Adrenal gland (tissue), 19 donors: ENCODE measurements at regions of chr3 and their contacts with region 1.

Region 1: DNA sequence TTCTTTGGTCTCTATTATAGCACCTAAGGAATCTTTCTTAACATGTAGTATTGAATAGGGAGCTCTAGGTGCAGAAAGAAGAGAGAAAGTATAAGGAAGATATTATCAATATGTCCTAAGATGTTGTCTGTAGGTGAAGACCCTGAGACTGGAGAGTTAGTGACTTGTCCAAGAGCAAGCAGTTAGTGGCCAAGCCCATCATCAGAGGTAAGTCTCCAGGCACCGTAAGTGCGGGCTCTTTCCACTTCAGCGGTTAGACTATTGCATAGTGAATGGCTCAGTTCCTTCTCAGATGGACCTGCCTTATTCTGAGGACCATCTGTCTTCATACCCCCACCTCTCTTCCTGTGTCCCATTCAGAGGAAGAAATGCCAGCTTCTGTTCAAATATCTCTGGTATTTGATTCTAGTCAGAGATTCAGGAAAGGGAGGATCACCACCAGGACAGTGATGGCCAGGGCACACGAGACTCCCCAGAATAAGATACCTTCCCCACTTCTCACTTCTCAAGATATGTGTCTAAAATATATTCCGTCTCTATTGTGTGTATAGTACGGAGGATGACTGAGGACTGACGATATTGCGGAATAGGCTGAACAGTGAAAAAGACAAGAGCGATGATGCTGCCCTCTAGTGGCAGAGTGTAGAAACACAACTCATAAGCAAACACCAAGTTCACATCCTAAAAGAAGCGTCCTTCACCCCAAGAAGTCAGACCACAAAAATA is 19.1 kb upstream of the ADGRG7 start:
- DNase-seq: peak; percentile 48 to 83 (median 60)
- H3K4me3 ChIP-seq: no peak overlapping the region
- H3K27ac ChIP-seq: no peak overlapping the region
- H3K4me1 ChIP-seq: no peaks in the 10 kb centered on the region
- H3K27me3 ChIP-seq: no peaks in the 10 kb centered on the region
- CTCF ChIP-seq: peak; percentile 86 to 94 (median 92)
- POLR2A ChIP-seq: no peak

Region 2: GRCh38 chr3:100463002-100463401 is 127.3 kb before region 1 on chr3:
- intact Hi-C with region 1: loop called (anchors 2 to 5 kb)
- DNase-seq: peak; percentile 29 to 66 (median 42)
- H3K4me3 ChIP-seq: no peak overlapping the region
- H3K27ac ChIP-seq: no peak overlapping the region
- H3K4me1 ChIP-seq: no peaks in the 10 kb centered on the region
- H3K27me3 ChIP-seq: no peaks in the 10 kb centered on the region
- CTCF ChIP-seq: peak; percentile 39 to 92 (median 88)
- POLR2A ChIP-seq: no peak

Region 3: DNA sequence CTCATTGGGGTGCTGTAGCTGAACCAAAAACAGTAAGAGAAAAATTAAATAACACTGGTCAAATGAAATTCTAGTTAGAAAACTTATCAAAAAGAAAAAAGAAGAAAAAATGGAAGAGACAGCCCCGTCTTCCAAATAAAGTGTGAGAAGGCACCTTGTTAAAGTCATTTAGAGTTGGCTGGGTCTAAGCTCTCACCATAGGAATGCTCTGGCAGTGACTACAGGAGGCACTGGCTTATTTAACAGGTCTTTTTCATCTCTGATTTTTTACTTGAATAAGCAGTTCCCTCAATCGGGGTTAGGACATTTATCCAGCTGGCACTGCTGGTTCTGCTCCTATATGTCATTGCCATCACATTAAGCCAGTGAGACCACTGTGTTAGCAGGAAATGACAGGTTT is 404.5 kb after region 1 on chr3:
- intact Hi-C with region 1: no loop called
- DNase-seq: no peak
- H3K4me3 ChIP-seq: no peak overlapping the region
- H3K27ac ChIP-seq: no peak overlapping the region
- H3K4me1 ChIP-seq: no peaks in the 10 kb centered on the region
- H3K27me3 ChIP-seq: no peaks in the 10 kb centered on the region
- CTCF ChIP-seq: no peak
- POLR2A ChIP-seq: no peak